Ascending aorta (tissue), 2 donors: ENCODE measurements at regions of chr16 and their contacts with region 1.

Region 1: DNA sequence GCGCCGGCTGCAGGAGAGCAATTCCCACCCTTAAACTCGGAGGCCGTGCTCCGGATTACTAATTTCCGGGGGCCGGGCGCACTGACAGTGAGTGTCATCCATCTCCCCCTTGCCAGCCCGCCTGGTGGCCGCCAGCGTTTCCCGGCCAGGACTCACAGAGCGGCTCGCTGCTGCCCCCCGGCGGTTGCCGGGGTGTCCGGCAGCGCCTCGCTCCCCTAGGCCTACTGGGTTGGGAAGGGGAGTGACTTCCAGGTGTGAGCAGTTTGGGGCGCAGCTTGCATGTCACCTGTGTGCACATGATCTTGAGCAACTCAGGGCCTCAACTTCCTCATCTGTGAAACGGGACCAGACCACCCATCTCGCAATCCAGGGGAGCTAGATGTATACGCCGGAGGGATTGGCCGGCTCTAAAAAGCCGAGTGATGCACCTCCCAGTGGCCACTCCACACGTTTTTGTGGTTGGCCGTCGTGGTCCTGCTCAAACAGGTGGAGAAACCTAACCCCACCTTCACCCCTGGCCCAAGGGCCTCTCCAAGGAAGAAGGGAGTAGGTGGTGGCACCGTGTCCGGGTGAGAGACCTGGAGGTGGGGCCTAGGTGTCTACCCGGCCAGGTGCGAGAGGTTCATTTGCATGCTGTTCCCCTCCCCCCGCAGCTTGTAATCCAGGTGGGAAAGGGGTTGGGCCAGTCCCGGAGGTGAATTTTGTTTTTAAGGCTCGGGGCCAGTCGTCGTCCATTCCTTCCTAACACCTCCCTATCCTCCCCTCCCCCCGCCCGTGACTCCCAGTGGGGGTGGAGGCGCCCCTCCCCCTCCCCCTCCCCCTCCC is 2.4 kb upstream of the GSE1 start:
- DNase-seq: peak; percentile 40 to 93
- H3K4me3 ChIP-seq: peak overlapping the region; percentile 64 to 83
- H3K27ac ChIP-seq: peak overlapping the region; percentile 91 to 92
- H3K4me1 ChIP-seq: peaks cover 17 to 46% of the 10 kb centered on the region in 2 donors
- H3K27me3 ChIP-seq: no peaks in the 10 kb centered on the region
- CTCF ChIP-seq: peak; percentile 98 to 99 (median 99)

Region 2: DNA sequence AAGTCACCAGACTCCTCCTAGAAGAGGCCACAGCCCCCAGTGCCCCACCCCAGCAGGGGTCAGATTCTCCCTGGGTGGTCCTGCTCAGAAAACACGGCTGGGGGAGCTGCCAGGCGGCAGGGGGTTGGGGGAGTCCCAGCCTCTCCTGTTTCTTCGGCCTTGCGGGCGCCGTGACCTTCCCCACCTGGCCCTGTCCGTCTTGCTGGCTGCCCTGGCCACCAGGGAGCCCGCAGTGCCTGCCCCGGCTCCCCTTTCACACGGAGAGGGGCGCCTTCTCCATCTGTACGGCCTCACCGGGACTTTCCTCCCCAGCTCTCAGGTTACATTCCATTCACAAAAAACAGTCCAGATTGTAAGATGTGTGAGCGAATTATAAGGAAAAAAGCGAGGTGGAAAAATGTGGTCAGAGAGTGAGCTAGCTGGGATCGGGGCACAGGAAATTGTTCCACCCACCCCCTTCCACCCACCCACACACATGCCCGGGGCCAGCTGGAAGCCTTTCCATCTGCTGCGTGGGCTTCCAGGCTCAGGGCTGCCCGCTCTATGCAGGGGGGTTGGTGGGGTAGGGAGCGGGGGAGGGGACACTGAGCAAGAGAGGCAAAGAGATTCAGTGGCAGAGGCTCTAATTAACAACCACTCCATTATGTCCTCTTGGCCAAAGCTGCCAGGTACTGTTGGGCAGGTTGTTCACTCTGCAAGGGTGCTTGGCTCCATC is 483.9 kb before region 1 on chr16:
- intact Hi-C with region 1: loop called (anchors 5 kb)
- DNase-seq: peak in 1 of 2 donors; percentile 90
- H3K4me3 ChIP-seq: peak overlapping the region in 1 of 2 donors; percentile 9
- H3K27ac ChIP-seq: peak overlapping the region; percentile 88 to 94
- H3K4me1 ChIP-seq: peaks cover 19 to 57% of the 10 kb centered on the region in 2 donors
- H3K27me3 ChIP-seq: no peaks in the 10 kb centered on the region
- CTCF ChIP-seq: no peak

Region 3: GRCh38 chr16:85369741-85370528 is 240.8 kb before region 1 on chr16:
- intact Hi-C with region 1: loop called (anchors 1 kb)
- DNase-seq: peak in 1 of 2 donors; percentile 87
- H3K4me3 ChIP-seq: peak overlapping the region in 1 of 2 donors; percentile 51
- H3K27ac ChIP-seq: peak overlapping the region; percentile 82 to 87
- H3K4me1 ChIP-seq: peaks cover 20 to 39% of the 10 kb centered on the region in 2 donors
- H3K27me3 ChIP-seq: no peaks in the 10 kb centered on the region
- CTCF ChIP-seq: peak; percentile 83 to 89 (median 84)

Region 4: DNA sequence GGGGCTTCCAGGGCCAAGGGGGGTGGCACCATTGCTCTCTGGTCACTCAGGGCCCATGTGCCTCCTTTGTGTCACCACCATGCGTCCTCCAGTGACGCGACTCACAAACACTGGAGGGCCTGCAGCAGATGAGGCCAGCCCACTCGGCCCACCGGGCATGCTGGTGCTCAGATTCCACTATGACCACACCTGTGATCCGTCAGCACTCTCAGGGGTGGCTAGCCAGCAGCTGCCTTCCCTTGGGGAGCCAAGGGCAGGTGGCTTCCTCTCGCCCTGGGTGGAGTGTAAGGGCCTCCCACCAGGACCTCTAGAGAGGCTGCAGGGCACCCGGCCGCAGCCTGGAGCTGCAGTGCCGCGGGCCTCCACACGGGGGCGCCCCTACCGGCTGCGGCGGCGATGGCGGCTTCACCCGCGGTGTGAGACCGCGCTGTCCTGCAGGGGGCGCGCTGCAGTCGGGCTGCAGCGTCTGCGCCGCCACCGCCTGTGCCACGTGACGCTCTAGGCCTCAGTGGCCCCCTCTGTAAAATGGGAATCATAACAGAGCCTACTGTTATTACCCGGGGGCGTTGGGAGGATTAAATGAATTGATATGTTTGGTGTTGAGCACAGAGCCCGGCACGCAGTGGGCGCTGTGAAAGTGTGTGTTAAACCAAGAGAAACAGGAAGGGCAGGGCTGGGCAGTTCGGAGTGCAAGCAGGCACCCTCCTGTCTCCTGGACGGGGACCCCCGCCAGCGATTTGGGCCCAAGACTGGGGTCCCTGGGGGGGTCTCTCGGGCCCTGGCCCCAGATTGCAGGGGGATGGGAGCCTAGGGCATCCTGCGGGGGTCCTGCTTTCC is 190.0 kb before region 1 on chr16:
- intact Hi-C with region 1: loop called (anchors 1 kb)
- DNase-seq: no peak
- H3K4me3 ChIP-seq: no peak overlapping the region
- H3K27ac ChIP-seq: no peak overlapping the region
- H3K4me1 ChIP-seq: peaks cover 0 to 3% of the 10 kb centered on the region in 2 donors
- H3K27me3 ChIP-seq: no peaks in the 10 kb centered on the region
- CTCF ChIP-seq: peak; percentile 99 to 100 (median 100)

Region 5: DNA sequence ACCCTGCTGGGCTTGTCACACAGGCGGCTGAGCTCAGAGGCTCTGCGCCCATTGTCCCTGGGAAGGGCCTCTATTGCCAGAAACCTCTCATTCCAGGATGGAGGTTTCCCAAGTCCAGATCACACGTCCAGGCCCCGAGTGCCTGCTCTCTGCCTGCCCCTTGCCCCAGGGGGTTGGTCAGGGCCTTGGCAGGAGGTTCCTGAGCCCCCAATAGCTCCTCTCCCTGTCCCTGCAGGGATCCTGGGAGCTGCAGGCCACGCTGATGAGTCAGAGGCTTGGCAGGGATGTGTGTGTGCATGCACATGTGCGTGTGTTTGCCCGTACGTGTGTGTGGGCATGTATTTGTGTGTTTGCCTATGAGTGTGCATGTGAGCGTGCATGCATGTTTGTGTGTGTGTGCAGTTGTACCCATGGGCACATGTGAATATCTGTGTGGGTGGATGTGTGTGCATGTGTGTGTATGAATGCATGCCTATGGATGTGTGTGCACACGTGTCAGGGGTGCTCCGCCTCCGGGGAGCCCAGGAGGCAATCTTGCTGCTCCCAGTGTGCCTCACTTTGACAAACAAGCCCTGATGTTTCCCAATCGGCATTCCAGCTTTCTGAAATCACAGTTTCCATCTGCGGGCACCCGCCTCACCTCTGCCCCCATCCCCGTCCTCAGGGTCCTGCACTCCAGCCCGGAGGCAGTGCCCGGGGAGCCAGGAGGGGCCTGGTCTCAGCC is 96.0 kb before region 1 on chr16:
- intact Hi-C with region 1: loop called (anchors 1 kb)
- DNase-seq: peak; percentile 35 to 93
- H3K4me3 ChIP-seq: peak overlapping the region in 1 of 2 donors; percentile 25
- H3K27ac ChIP-seq: peak overlapping the region; percentile 81 to 88
- H3K4me1 ChIP-seq: peaks cover 7 to 26% of the 10 kb centered on the region in 2 donors
- H3K27me3 ChIP-seq: no peaks in the 10 kb centered on the region
- CTCF ChIP-seq: peak in 2 of 3 experiments; percentile 22 to 25

Region 6: DNA sequence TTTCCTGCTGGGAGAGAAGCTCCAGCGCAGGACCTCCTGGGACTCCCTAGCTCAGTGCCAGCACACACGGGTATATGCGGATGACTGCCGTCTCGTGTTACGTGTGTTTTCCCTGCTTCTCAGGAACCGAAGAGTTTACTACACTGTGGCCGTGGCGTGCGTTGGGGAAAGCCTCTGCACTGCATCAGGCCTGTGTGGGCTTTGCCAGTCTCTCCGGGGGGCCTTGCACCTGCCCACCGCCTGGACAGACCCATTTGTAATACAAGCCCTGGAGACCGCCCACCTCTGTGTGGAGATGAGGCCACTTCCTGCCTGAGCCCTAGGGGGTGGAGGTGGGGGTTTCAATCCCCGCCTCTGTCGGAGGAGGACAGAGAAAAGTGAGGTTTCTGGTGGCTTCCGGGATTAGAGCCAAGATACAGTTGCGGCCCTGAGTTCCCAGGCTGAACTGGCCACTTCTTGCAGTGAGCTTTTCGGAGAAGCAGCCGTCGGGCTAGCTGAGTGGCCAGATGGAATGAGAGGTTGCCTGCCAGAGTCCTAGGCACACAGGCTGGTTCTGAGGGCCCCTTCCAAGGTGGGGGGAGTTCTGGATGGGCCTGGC is 41.0 kb before region 1 on chr16:
- intact Hi-C with region 1: loop called (anchors 2 kb)
- DNase-seq: no peak
- H3K4me3 ChIP-seq: no peak overlapping the region
- H3K27ac ChIP-seq: peak overlapping the region in 1 of 2 donors; percentile 27
- H3K4me1 ChIP-seq: peaks cover 9 to 12% of the 10 kb centered on the region in 2 donors
- H3K27me3 ChIP-seq: no peaks in the 10 kb centered on the region
- CTCF ChIP-seq: no peak